ENCODE measurements at regions of chr20 and their contacts with region 1.

Region 1: DNA sequence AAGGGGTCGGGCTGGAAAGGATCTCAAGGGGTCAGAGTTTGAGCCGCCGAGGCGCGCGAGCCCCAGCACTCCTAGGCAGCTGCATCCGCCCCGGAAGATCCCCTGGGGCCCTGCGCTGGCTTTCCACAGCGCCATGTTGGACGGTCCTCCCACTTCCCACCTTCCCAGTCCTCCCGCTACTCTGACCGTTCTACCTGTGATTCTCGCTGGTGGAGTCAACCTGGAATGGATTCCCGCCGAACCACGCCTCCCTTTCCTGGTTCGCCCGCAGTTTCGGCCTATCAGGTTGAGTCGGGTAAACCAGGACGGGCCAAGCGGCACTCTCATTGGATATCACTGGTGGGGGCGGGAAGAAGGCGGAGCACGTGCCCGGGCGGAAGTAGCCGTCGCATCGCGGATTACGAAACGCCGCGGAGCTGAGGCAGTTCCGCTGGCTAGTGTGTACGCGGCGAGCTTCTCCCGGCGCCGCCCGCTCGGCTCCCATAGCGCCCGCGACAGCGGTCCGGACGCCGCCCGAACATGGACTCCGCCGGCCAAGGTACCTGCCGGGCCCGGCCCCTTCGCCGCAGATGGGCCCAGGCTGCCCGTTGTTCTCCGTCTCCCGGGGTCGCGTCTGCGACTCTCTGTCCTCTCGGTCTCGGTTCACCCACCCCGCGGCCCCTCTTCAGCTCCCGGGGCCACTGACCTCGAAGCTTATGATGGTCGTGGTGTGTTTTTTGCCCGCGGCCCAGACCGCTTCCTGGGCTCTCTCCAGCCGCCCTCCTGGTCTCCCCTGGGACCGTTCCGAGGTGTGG is at the start of gene TPD52L2:
- DNase-seq: peak; percentile 99
- ATAC-seq: peak; percentile 86
- H3K4me3 Mint-ChIP-seq: peak within 1 kb of the TSS; percentile 79
- H3K27ac Mint-ChIP-seq: peak within 1 kb of the TSS; percentile 92
- H3K4me1 Mint-ChIP-seq: peaks cover 24% of the 10 kb centered on the region
- H3K27me3 Mint-ChIP-seq: no peaks in the 10 kb centered on the region
- total RNA-seq, gene TPD52L2: 54.0 to 56.3 TPM

Region 2: DNA sequence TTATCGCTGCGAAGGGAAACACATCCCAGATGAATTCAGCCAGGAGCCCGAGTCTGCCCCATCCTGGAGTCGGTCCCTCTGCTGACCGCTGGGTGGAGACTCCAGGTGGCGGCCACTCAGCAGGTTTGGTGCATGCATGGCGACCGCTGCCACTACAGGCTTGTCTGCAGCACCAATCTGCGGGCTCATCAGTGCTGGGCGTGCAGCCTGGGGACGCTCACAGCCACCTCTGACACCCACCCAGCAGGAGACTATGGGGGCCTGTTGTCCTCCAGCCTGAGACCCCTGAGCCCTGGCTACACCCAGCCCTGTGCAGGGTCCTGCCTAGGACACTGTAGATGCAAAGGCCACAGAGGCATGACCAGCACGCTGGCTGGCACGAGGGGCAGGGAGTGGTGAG is 1348.7 kb before region 1 on chr20:
- CTCF ChIA-PET with region 1: no interaction called
- POLR2A ChIA-PET with region 1: no interaction called
- intact Hi-C with region 1: no loop called
- DNase-seq: no peak
- ATAC-seq: no peak
- H3K4me3 Mint-ChIP-seq: no peak overlapping the region
- H3K27ac Mint-ChIP-seq: no peak overlapping the region
- H3K4me1 Mint-ChIP-seq: peaks cover 4% of the 10 kb centered on the region
- H3K27me3 Mint-ChIP-seq: peaks cover 19% of the 10 kb centered on the region

Region 3: GRCh38 chr20:63042448-63043071 is 822.5 kb before region 1 on chr20:
- CTCF ChIA-PET with region 1: no interaction called
- POLR2A ChIA-PET with region 1: no interaction called
- intact Hi-C with region 1: no loop called
- DNase-seq: no peak
- ATAC-seq: no peak
- H3K4me3 Mint-ChIP-seq: no peak overlapping the region
- H3K27ac Mint-ChIP-seq: no peak overlapping the region
- H3K4me1 Mint-ChIP-seq: no peaks in the 10 kb centered on the region
- H3K27me3 Mint-ChIP-seq: peaks cover 20% of the 10 kb centered on the region

Region 4: DNA sequence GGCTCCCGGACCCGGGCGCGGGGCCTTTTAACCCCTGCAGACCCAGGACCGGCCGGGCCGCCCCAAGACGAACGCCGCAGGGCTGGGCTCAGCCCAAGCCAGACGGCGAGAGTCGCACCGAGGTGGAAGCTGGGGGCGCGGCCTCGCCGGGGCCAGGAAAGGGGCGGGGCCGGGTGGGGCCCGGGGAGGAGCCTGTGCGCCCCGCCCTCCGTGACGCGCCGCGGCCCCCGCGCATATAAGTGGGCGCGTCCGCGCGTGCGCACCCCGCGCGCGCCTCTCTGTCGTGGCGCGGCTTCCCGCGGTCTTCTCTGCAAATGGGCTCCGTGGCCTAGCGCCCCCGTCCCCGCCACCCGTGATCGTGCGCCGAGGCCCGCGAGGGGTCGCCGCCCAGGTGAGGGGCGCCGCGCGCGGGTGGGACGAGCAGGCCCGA is 344.5 kb before region 1 on chr20 and contains the start of gene PPDPF:
- CTCF ChIA-PET with region 1: no interaction called
- POLR2A ChIA-PET with region 1: no interaction called
- intact Hi-C with region 1: loop called in 1 of 2 experiments (anchors 1 kb)
- DNase-seq: peak; percentile 93
- ATAC-seq: peak; percentile 80
- H3K4me3 Mint-ChIP-seq: peak within 1 kb of the TSS; percentile 77
- H3K27ac Mint-ChIP-seq: peak within 1 kb of the TSS; percentile 78
- H3K4me1 Mint-ChIP-seq: peaks cover 10% of the 10 kb centered on the region
- H3K27me3 Mint-ChIP-seq: no peaks in the 10 kb centered on the region
- total RNA-seq, gene PPDPF: 119 to 133 TPM

Region 5: DNA sequence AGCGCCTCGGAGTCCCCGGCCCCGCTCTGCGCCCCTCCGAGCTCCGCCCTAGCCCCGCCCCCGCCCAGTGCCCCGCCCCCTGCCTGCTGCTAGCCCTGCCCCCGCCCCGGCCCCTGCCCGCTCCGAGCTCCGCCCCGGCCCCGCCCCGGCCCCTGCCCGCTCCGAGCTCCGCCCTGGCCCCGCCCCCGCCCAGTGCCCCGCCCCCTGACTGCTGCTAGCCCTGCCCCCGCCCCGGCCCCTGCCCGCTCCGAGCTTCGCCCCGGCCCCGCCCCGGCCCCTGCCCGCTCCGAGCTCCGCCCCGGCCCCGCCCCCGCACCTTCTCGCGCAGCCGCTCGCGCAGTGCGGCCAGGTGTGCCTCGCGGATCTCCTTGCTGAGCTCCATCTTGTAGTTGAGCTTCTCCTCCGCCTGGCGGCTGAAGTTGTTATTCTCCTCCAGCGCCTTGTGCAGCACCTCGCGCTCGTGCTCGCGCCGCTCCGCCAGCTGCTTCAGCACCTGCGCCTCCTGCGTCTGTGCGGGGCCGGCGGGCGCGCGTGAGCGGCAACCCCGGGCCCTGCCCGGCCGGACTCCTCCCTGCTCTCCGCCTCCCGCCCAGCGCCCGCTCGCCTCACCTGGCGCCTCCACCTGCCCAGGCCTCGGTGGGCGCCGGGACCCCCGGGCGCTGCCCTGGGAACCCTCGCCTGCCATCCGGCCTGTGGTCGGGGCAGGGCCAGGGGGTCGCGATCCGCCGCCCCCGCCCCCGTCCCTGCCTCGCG is 223.1 kb before region 1 on chr20:
- CTCF ChIA-PET with region 1: interaction called, 3 read pairs
- POLR2A ChIA-PET with region 1: no interaction called
- intact Hi-C with region 1: loop called in 1 of 2 experiments (anchors 1 kb)
- DNase-seq: peak; percentile 98
- ATAC-seq: peak; percentile 73
- H3K4me3 Mint-ChIP-seq: peak overlapping the region; percentile 65
- H3K27ac Mint-ChIP-seq: no peak overlapping the region
- H3K4me1 Mint-ChIP-seq: peaks cover 31% of the 10 kb centered on the region
- H3K27me3 Mint-ChIP-seq: no peaks in the 10 kb centered on the region

Region 6: GRCh38 chr20:63739130-63740069 is 125.6 kb before region 1 on chr20 and contains the start of gene SLC2A4RG:
- CTCF ChIA-PET with region 1: no interaction called
- POLR2A ChIA-PET with region 1: interaction called, 3 read pairs
- intact Hi-C with region 1: loop called in 1 of 2 experiments (anchors 1 kb)
- DNase-seq: peak; percentile 79
- ATAC-seq: peak; percentile 58
- H3K4me3 Mint-ChIP-seq: peak within 1 kb of the TSS; percentile 33
- H3K27ac Mint-ChIP-seq: no peak within 1 kb of the TSS
- H3K4me1 Mint-ChIP-seq: peaks cover 19% of the 10 kb centered on the region
- H3K27me3 Mint-ChIP-seq: no peaks in the 10 kb centered on the region
- total RNA-seq, gene SLC2A4RG: 30.9 to 34.9 TPM

Region 7: DNA sequence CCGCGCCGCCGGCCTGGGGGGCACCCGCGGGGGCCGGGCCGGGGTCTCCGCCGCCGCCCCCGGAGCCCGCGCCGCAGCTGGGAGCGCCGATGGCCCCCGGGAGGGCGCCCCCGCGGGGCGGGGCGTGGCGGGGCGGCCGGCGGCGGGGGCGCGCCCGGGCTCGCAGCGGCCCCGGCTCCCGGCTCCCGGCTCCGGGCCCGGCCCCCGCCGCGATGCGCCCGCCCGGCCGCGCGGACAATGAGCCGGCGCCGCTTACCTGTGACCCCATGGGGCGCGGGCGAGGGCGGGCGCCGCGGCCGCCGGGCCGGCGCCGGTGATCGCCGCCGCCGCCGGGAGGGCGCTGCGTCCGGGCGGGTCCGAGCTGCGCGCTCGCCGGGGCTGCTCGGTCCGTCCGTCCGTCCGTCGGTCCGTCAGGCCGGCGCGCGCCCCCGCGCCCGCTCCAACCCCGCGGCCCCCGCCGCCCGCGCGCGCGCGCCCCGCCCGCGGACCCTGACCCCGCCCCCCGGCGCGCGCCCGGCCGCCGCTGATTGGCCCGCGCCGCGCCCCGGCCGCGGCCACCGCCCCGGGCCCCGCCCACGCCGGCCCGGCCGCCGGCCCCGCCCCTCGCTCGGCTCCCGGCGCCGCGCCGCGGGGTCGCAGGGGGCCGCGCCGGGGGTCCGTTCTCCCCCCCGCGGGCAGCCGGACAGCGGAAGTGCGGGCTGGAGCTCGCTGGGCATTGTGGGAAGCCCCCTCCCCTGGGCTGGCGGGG is 34.0 kb before region 1 on chr20 and contains the start of gene ZBTB46:
- CTCF ChIA-PET with region 1: no interaction called
- POLR2A ChIA-PET with region 1: no interaction called
- intact Hi-C with region 1: loop called in 1 of 2 experiments (anchors 1 kb)
- DNase-seq: peak; percentile 54
- ATAC-seq: peak; percentile 40
- H3K4me3 Mint-ChIP-seq: peak within 1 kb of the TSS; percentile 65
- H3K27ac Mint-ChIP-seq: no peak within 1 kb of the TSS
- H3K4me1 Mint-ChIP-seq: peaks cover 15% of the 10 kb centered on the region
- H3K27me3 Mint-ChIP-seq: peaks cover 30% of the 10 kb centered on the region
- total RNA-seq, gene ZBTB46: 0.88 to 1.3 TPM

Region 8: DNA sequence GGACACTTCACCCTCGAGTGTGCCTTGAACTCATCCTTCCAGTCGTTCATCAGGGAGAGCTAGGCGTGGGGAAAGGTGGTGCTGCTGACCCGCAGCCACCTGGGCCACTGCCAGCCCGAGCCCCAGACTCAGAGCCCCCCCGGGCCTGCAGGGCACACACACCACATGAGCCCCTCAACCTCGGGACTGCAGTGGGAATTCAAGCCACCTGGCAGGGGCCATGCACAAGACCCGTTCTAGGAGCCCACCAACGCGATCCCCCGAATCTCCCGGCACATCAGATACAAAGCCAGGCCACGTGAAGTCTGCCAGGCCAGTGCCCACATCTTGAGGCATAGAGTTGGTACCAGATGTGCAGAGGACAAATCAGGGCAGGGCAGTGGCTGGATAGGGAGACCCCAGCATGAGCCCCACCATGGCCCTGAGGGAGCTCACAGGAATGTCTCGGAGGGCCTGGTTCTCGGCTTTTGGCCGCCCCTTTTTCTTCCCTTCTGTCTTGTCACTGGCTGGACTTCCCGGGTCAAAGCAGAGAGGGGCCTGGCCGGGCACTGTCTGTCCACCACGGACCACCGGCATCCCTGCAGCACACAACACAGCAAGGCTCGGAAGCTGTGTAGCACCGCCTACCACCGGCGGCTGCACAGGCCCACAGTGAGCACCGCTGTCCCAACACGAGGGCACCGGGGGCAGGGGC is 102.0 kb after region 1 on chr20:
- CTCF ChIA-PET with region 1: no interaction called
- POLR2A ChIA-PET with region 1: no interaction called
- intact Hi-C with region 1: no loop called
- DNase-seq: no peak
- ATAC-seq: no peak
- H3K4me3 Mint-ChIP-seq: no peak overlapping the region
- H3K27ac Mint-ChIP-seq: no peak overlapping the region
- H3K4me1 Mint-ChIP-seq: peaks cover 10% of the 10 kb centered on the region
- H3K27me3 Mint-ChIP-seq: no peaks in the 10 kb centered on the region

Region 9: GRCh38 chr20:63980806-63981728 is 116.0 kb after region 1 on chr20 and contains the start of gene PRPF6:
- CTCF ChIA-PET with region 1: interaction called, 4 read pairs
- POLR2A ChIA-PET with region 1: no interaction called
- intact Hi-C with region 1: loop called (anchors 1 kb)
- DNase-seq: peak; percentile 98
- ATAC-seq: peak; percentile 47
- H3K4me3 Mint-ChIP-seq: peak within 1 kb of the TSS; percentile 97
- H3K27ac Mint-ChIP-seq: peak within 1 kb of the TSS; percentile 98
- H3K4me1 Mint-ChIP-seq: peaks cover 59% of the 10 kb centered on the region
- H3K27me3 Mint-ChIP-seq: no peaks in the 10 kb centered on the region
- total RNA-seq, gene PRPF6: 60.5 to 67.0 TPM

Region 10: GRCh38 chr20:64010711-64011237 is 145.7 kb after region 1 on chr20:
- CTCF ChIA-PET with region 1: no interaction called
- POLR2A ChIA-PET with region 1: no interaction called
- intact Hi-C with region 1: no loop called
- DNase-seq: no peak
- ATAC-seq: peak; percentile 33
- H3K4me3 Mint-ChIP-seq: no peak overlapping the region
- H3K27ac Mint-ChIP-seq: peak overlapping the region; percentile 83
- H3K4me1 Mint-ChIP-seq: peaks cover 32% of the 10 kb centered on the region
- H3K27me3 Mint-ChIP-seq: no peaks in the 10 kb centered on the region

Measured in activated CD4-positive, alpha-beta T cell treated with anti-CD3 and anti-CD28 coated beads for 36 hours (primary cell).